Mammary epithelial cell (primary cell): ENCODE measurements at regions of chr1 and their contacts with region 1.

Region 1: DNA sequence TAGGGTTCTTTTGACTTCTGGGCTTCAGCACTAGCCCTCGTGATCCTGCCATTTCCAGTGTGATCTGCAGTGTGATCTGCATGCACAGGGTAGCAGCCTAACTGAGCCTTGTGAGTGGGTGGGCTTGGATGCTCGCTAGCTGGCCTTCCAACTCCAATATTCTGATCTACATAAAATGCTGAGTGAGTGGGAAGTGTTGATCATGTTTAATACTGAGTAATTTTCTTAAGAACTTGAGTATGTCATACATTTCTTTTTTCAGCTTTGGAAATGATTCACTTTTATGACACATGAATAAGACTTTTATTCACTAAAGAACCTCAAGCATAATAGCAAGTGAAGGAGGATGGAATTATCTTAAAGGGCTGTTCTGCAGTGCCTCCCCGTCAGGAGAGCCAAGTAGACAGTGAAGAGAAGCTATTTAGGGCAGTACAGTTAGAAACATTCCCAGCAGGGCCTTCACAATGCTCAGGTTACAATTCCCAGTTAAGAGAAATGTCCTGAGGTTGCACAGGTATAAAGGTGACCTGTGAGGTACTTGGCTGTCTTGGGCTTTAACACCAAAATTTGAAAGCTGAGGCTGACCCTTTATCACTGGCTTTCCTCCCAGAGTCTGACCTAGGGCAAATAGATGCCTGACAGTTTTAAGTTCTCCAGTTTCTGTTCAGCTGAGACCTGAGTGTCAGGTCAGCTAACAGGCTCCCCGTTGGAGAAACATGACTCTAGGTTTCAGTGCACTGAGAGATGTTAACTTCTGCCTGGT is 29.1 kb upstream of the LRRC8C start:
- DNase-seq: peak; percentile 66
- H3K4me3 ChIP-seq: no peak overlapping the region
- H3K27ac ChIP-seq: no peak overlapping the region
- H3K4me1 ChIP-seq: peaks cover 44% of the 10 kb centered on the region
- H3K27me3 ChIP-seq: no peaks in the 10 kb centered on the region
- CTCF ChIP-seq: no peak

Region 2: GRCh38 chr1:89454845-89455521 is 148.8 kb before region 1 on chr1:
- CTCF ChIA-PET with region 1: no interaction called
- dilution Hi-C with region 1: no loop called
- in situ Hi-C with region 1: no loop called
- intact Hi-C with region 1: no loop called
- DNase-seq: peak; percentile 66
- H3K4me3 ChIP-seq: no peak overlapping the region
- H3K27ac ChIP-seq: peak overlapping the region; percentile 36
- H3K4me1 ChIP-seq: peaks cover 39% of the 10 kb centered on the region
- H3K27me3 ChIP-seq: no peaks in the 10 kb centered on the region
- CTCF ChIP-seq: peak; percentile 50 to 64

Region 3: DNA sequence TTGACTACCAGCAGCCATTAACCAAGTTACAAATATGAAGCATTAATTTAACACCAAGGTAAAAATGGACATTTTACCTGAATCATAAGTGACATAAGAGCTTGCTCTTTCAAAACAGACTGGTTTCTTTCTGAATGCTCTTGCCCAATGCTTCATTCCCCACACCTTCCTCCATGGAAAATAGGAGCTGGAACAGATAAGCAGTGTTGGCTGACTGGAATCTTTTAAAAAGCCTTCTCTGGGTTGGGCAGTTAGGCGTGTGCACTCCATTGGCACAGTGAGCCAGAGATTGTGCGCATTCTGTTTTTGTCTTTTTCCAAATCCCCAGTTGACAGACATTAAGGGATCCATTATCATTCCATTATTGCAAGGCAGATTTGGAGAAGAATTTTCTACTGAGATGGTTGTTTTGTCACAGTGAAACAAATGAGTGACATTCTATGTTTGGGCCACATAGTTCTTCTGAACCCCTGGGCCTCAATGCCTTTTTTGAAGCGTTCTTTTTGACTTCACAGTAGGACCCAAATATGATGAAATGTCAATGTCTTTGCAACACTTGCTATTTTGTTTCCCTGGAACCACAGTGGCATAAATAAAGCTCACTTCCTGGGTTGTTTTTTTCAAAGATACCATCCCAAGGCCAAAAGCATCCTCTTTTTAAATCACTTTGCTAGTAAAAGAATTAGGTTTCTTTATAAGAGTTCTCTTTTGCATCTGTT is 46.9 kb before region 1 on chr1:
- CTCF ChIA-PET with region 1: no interaction called
- dilution Hi-C with region 1: loop called (anchors 5 kb)
- in situ Hi-C with region 1: no loop called
- intact Hi-C with region 1: no loop called
- DNase-seq: no peak
- H3K4me3 ChIP-seq: no peak overlapping the region
- H3K27ac ChIP-seq: no peak overlapping the region
- H3K4me1 ChIP-seq: no peaks in the 10 kb centered on the region
- H3K27me3 ChIP-seq: no peaks in the 10 kb centered on the region
- CTCF ChIP-seq: no peak

Region 4: GRCh38 chr1:89641781-89642180 is 37.9 kb after region 1 on chr1:
- CTCF ChIA-PET with region 1: no interaction called
- dilution Hi-C with region 1: no loop called
- in situ Hi-C with region 1: no loop called
- intact Hi-C with region 1: no loop called
- DNase-seq: no peak
- H3K4me3 ChIP-seq: no peak overlapping the region
- H3K27ac ChIP-seq: no peak overlapping the region
- H3K4me1 ChIP-seq: peaks cover 8% of the 10 kb centered on the region
- H3K27me3 ChIP-seq: no peaks in the 10 kb centered on the region
- CTCF ChIP-seq: no peak